ENCODE measurements at regions of chr15 and their contacts with region 1.

Region 1: GRCh38 chr15:100918034-100918689 is 995 bp upstream of the LRRK1 start:
- DNase-seq: peak; percentile 85
- H3K4me3 Mint-ChIP-seq: peak overlapping the region; percentile 91
- H3K27ac Mint-ChIP-seq: peak overlapping the region; percentile 64
- H3K4me1 Mint-ChIP-seq: peaks cover 19% of the 10 kb centered on the region
- H3K27me3 Mint-ChIP-seq: no peaks in the 10 kb centered on the region
- CTCF ChIP-seq: peak; percentile 89

Region 2: GRCh38 chr15:100627789-100628395 is 290.3 kb before region 1 on chr15:
- CTCF ChIA-PET with region 1: interaction called, 6 read pairs
- POLR2A ChIA-PET with region 1: interaction called, 3 read pairs
- intact Hi-C with region 1: loop called (anchors 5 kb)
- DNase-seq: peak; percentile 78
- H3K4me3 Mint-ChIP-seq: no peak overlapping the region
- H3K27ac Mint-ChIP-seq: peak overlapping the region; percentile 41
- H3K4me1 Mint-ChIP-seq: peaks cover 6% of the 10 kb centered on the region
- H3K27me3 Mint-ChIP-seq: no peaks in the 10 kb centered on the region
- CTCF ChIP-seq: peak; percentile 84

Region 3: GRCh38 chr15:100902436-100903167 is 15.6 kb before region 1 on chr15:
- CTCF ChIA-PET with region 1: interaction called, 28 read pairs
- POLR2A ChIA-PET with region 1: no interaction called
- intact Hi-C with region 1: no loop called
- DNase-seq: no peak
- H3K4me3 Mint-ChIP-seq: no peak overlapping the region
- H3K27ac Mint-ChIP-seq: peak overlapping the region; percentile 76
- H3K4me1 Mint-ChIP-seq: no peaks in the 10 kb centered on the region
- H3K27me3 Mint-ChIP-seq: no peaks in the 10 kb centered on the region
- CTCF ChIP-seq: no peak

Region 4: DNA sequence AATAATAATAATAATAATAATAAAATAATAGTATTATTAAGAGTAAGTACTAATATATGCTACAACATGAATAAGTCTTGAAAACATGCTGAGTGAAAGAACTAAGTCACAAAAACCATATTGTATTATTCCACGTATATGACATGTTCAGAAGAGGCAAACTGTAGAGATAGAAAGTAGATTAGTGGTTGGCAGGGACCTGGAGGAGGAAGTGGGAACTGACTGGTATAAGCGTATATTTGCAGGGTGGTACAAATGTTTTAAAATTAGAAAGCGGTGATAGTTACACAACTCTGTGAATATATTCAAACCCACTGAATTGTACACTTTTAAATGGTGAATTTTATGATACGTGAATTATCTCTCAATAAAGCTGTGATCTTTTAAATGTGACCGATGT is 33.8 kb after region 1 on chr15:
- CTCF ChIA-PET with region 1: no interaction called
- POLR2A ChIA-PET with region 1: no interaction called
- intact Hi-C with region 1: no loop called
- DNase-seq: no peak
- H3K4me3 Mint-ChIP-seq: no peak overlapping the region
- H3K27ac Mint-ChIP-seq: no peak overlapping the region
- H3K4me1 Mint-ChIP-seq: no peaks in the 10 kb centered on the region
- H3K27me3 Mint-ChIP-seq: no peaks in the 10 kb centered on the region
- CTCF ChIP-seq: no peak

Region 5: DNA sequence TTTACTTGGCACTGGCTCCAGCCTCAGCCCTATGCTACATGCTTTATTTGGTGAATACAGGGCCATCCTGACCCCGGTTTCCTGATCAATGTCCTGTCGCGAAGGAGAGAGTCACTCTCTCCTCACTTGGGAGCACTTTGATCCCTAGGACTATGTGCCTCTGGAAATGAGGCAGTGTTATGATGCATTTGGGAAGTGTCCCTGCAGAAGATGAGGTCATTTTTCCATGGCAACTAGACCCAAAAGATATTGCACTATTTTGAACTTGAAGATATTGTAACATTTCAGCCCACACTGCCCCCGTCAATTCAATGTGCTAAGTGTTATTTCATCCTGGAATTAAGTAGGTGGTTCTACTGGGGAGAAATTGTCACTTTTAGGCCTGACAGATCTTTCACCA is 69.0 kb after region 1 on chr15:
- CTCF ChIA-PET with region 1: no interaction called
- POLR2A ChIA-PET with region 1: no interaction called
- intact Hi-C with region 1: no loop called
- DNase-seq: no peak
- H3K4me3 Mint-ChIP-seq: no peak overlapping the region
- H3K27ac Mint-ChIP-seq: no peak overlapping the region
- H3K4me1 Mint-ChIP-seq: no peaks in the 10 kb centered on the region
- H3K27me3 Mint-ChIP-seq: no peaks in the 10 kb centered on the region
- CTCF ChIP-seq: no peak

Region 6: GRCh38 chr15:101000271-101000681 is 82.1 kb after region 1 on chr15:
- CTCF ChIA-PET with region 1: interaction called, 98 read pairs
- POLR2A ChIA-PET with region 1: interaction called, 3 read pairs
- intact Hi-C with region 1: no loop called
- DNase-seq: no peak
- H3K4me3 Mint-ChIP-seq: no peak overlapping the region
- H3K27ac Mint-ChIP-seq: no peak overlapping the region
- H3K4me1 Mint-ChIP-seq: no peaks in the 10 kb centered on the region
- H3K27me3 Mint-ChIP-seq: no peaks in the 10 kb centered on the region
- CTCF ChIP-seq: no peak

Region 7: DNA sequence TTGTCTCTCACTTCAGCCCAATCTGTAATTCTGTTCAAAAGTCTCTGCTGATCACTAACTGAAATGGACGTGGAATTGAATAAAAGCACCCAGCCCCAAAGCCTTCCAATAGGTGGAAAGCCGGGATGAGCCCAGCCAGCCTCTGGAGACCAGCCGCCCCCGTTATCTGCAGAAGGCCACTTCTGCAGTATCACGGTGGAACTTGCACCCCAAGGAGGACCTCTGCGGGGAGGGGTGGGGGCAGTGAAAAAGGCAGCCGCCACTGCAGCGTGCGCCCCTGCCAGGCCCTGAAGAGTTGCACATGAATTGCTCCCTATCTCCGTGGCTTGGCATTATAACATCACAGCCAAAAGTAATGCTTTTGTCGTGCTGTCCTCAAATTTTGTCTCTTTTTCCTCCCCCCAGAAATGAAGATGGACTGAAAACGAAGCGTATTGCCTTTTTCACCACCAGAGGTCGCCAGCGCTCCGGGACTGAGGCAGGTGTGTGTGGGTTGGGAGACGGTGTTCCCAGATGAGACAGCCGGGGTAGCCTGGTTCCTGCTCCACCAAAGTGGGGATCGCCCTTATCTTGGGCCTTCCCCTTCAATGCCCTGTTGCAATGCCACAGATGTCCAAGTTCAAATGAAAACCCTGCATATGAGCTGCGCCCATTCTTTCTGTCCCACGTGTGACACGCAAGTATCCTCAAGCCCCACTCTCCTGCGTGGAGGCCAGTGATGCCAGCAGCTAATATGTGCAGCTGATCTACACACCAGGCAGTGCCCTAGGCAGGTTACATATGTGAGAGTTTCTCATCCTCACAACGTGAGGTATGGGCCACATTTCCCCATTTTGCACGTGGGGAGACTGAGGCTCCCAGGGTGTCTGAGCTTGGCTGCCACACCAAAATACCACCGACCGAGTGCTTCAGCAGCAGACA is 97.0 kb after region 1 on chr15:
- CTCF ChIA-PET with region 1: interaction called, 98 read pairs
- POLR2A ChIA-PET with region 1: no interaction called
- intact Hi-C with region 1: no loop called
- DNase-seq: peak; percentile 73
- H3K4me3 Mint-ChIP-seq: no peak overlapping the region
- H3K27ac Mint-ChIP-seq: no peak overlapping the region
- H3K4me1 Mint-ChIP-seq: no peaks in the 10 kb centered on the region
- H3K27me3 Mint-ChIP-seq: no peaks in the 10 kb centered on the region
- CTCF ChIP-seq: peak; percentile 82

Measured in MCF 10A (cell line).